Caco-2 (cell line): ENCODE measurements at regions of chr17 and their contacts with region 1.

Region 1: DNA sequence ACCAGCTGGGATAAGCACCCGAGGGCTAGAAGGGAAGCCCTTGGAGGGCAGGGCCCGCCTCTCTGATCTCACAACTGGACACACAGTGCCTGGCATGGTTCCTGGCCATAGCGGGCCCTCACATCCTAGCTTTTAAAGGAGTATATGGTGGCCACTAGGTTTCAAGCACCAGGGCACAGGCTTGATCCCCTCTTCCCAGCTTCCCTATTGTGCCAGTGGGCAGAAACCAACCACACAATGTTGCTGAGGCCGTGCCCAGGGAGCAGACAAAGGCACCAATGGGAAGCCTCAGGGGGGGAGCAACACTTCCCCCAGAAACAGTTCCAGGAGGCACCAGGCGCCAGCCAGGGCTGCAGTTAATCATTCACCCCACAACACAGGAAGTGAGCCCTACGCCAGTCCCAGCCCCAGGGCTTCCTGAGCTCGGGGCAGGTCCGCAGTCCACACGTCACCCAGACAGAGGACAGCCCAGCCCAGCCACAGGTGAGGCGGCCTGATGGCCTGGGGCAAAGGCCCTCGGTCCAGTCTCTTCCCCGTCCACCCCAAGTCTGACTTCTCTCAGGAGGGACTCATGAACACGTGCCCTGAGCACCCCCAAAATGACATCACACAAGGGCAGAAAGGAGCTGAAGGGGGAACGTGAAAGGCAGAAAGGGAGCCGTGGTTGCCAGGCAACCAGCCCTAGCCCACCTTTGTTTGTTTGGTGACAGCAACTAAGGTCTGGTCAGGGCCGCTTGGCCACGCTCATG is 12.8 kb downstream of the SMIM5 start:
- DNase-seq: peak; percentile 96 to 97
- H3K4me3 ChIP-seq: 0 out of 2 replicates have a peak overlapping the region, but pooled peaks have one; percentile 5
- H3K4me3 Mint-ChIP-seq: peak overlapping the region; percentile 43
- H3K27ac Mint-ChIP-seq: peak overlapping the region; percentile 96
- H3K4me1 ChIP-seq: peaks cover 48% of the 10 kb centered on the region
- H3K4me1 Mint-ChIP-seq: peaks cover 23% of the 10 kb centered on the region
- H3K27me3 ChIP-seq: no peaks in the 10 kb centered on the region
- H3K27me3 Mint-ChIP-seq: no peaks in the 10 kb centered on the region
- CTCF ChIP-seq: peak in 1 of 2 experiments; percentile 2

Region 2: GRCh38 chr17:74712756-74713155 is 933.3 kb before region 1 on chr17 and contains the start of gene CD300LF:
- CTCF ChIA-PET with region 1: no interaction called
- POLR2A ChIA-PET with region 1: no interaction called
- intact Hi-C with region 1: no loop called
- DNase-seq: no peak
- H3K4me3 ChIP-seq: no peak within 1 kb of the TSS
- H3K4me3 Mint-ChIP-seq: no peak within 1 kb of the TSS
- H3K27ac Mint-ChIP-seq: peak within 1 kb of the TSS; percentile 56
- H3K4me1 ChIP-seq: peaks cover 29% of the 10 kb centered on the region
- H3K4me1 Mint-ChIP-seq: peaks cover 17% of the 10 kb centered on the region
- H3K27me3 ChIP-seq: no peaks in the 10 kb centered on the region
- H3K27me3 Mint-ChIP-seq: no peaks in the 10 kb centered on the region
- CTCF ChIP-seq: no peak
- total RNA-seq, gene CD300LF: 2.2 and 2.4 TPM in 2 replicates

Region 3: DNA sequence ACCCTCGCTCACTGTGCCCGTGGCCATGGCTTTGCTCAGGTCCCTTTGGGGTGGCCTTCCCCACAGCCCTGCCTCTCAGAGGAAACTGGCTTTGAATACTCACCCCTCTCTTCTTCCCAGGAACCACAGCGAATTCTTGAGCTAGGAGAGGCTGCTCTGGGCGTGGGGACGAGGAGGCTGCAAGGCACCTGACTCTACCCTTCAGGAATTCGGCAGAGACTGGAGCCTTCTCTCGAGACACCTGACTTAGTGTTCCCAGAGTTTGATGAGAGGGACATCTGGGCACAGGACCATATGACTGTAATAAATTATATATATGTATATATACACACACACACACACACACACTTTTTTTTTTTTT is 114.4 kb before region 1 on chr17:
- CTCF ChIA-PET with region 1: no interaction called
- POLR2A ChIA-PET with region 1: no interaction called
- intact Hi-C with region 1: no loop called
- DNase-seq: peak; percentile 44 to 51
- H3K4me3 ChIP-seq: no peak overlapping the region
- H3K4me3 Mint-ChIP-seq: no peak overlapping the region
- H3K27ac Mint-ChIP-seq: peak overlapping the region; percentile 81
- H3K4me1 ChIP-seq: peaks cover 49% of the 10 kb centered on the region
- H3K4me1 Mint-ChIP-seq: peaks cover 37% of the 10 kb centered on the region
- H3K27me3 ChIP-seq: no peaks in the 10 kb centered on the region
- H3K27me3 Mint-ChIP-seq: no peaks in the 10 kb centered on the region
- CTCF ChIP-seq: no peak

Region 4: GRCh38 chr17:75571197-75571873 is 74.7 kb before region 1 on chr17:
- CTCF ChIA-PET with region 1: no interaction called
- POLR2A ChIA-PET with region 1: no interaction called
- intact Hi-C with region 1: no loop called
- DNase-seq: no peak
- H3K4me3 ChIP-seq: no peak overlapping the region
- H3K4me3 Mint-ChIP-seq: no peak overlapping the region
- H3K27ac Mint-ChIP-seq: peak overlapping the region; percentile 7
- H3K4me1 ChIP-seq: peaks cover 3% of the 10 kb centered on the region
- H3K4me1 Mint-ChIP-seq: no peaks in the 10 kb centered on the region
- H3K27me3 ChIP-seq: no peaks in the 10 kb centered on the region
- H3K27me3 Mint-ChIP-seq: no peaks in the 10 kb centered on the region
- CTCF ChIP-seq: no peak

Region 5: DNA sequence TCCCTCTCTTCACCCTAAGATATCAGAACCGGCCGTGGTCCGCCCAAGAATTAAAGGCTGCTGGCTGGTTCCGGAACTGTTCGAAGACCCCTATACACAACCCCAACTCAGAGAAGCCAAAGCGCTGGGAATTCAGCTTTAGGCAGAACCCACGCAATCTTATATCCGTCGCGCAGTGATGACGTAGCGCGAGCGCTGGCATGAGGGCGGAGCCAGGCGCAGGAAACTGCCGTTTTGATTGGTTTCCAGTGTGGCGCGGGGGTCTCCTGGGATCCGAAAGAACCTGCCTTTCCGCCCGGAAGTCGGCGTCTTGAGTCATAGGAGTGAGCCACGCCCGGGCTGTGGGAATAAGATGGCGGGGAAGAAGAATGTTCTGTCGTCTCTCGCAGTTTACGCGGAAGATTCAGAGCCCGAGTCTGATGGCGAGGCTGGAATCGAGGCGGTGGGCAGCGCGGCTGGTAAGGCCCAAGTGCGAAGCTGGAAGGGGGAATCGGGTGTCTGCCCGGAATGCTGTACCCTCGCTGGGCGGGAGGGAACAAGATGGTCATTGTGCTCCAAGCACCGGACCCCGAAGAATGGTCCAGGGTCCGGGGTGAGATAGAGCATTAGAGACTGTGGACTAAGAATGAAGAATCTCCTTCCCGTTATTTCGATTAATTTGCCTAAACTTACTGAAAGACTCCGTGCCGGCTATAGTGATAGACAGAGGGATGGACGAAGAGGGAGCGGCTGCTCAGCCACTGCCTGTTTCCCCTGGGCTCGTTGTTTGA is 21.1 kb after region 1 on chr17 and contains the starts of genes RECQL5 and SAP30BP:
- CTCF ChIA-PET with region 1: interaction called, 3 read pairs
- POLR2A ChIA-PET with region 1: interaction called, 15 read pairs
- intact Hi-C with region 1: no loop called
- DNase-seq: peak; percentile 97 to 98
- H3K4me3 ChIP-seq: peak within 1 kb of the TSS; percentile 96
- H3K4me3 Mint-ChIP-seq: no peak within 1 kb of the TSS
- H3K27ac Mint-ChIP-seq: peak within 1 kb of the TSS; percentile 10
- H3K4me1 ChIP-seq: peaks cover 13% of the 10 kb centered on the region
- H3K4me1 Mint-ChIP-seq: no peaks in the 10 kb centered on the region
- H3K27me3 ChIP-seq: no peaks in the 10 kb centered on the region
- H3K27me3 Mint-ChIP-seq: no peaks in the 10 kb centered on the region
- CTCF ChIP-seq: no peak
- total RNA-seq, gene RECQL5: 67.0 and 67.7 TPM in 2 replicates
- total RNA-seq, gene SAP30BP: 119 and 126 TPM in 2 replicates